ENCODE measurements at regions of chr7 and their contacts with region 1.

Region 1: GRCh38 chr7:149497456-149498261 is at the start of gene ZNF746:
- DNase-seq: peak; percentile 59 to 91 (median 78)
- ATAC-seq: peak; percentile 93
- H3K4me3 ChIP-seq: peak within 1 kb of the TSS; percentile 56 to 71
- H3K4me3 Mint-ChIP-seq: peak within 1 kb of the TSS; percentile 95
- H3K27ac ChIP-seq: peak within 1 kb of the TSS; percentile 40 to 51
- H3K27ac Mint-ChIP-seq: peak within 1 kb of the TSS; percentile 94
- H3K4me1 ChIP-seq: peaks cover 19% of the 10 kb centered on the region
- H3K4me1 Mint-ChIP-seq: peaks cover 32% of the 10 kb centered on the region
- H3K27me3 ChIP-seq: no peaks in the 10 kb centered on the region
- H3K27me3 Mint-ChIP-seq: no peaks in the 10 kb centered on the region
- CTCF ChIP-seq: peak; percentile 33
- total RNA-seq, gene ZNF746: 28.4 to 31.1 TPM

Region 2: GRCh38 chr7:149071641-149072437 is 425.8 kb before region 1 on chr7:
- CTCF ChIA-PET with region 1: no interaction called
- POLR2A ChIA-PET with region 1: interaction called, 3 read pairs
- intact Hi-C with region 1: loop called in 1 of 2 experiments (anchors 5 kb)
- DNase-seq: peak; percentile 19 to 74 (median 49)
- ATAC-seq: peak; percentile 73
- H3K4me3 ChIP-seq: no peak overlapping the region
- H3K4me3 Mint-ChIP-seq: no peak overlapping the region
- H3K27ac ChIP-seq: peak overlapping the region; percentile 42 to 63
- H3K27ac Mint-ChIP-seq: peak overlapping the region; percentile 77
- H3K4me1 ChIP-seq: no peaks in the 10 kb centered on the region
- H3K4me1 Mint-ChIP-seq: peaks cover 3% of the 10 kb centered on the region
- H3K27me3 ChIP-seq: no peaks in the 10 kb centered on the region
- H3K27me3 Mint-ChIP-seq: no peaks in the 10 kb centered on the region
- CTCF ChIP-seq: no peak

Region 3: DNA sequence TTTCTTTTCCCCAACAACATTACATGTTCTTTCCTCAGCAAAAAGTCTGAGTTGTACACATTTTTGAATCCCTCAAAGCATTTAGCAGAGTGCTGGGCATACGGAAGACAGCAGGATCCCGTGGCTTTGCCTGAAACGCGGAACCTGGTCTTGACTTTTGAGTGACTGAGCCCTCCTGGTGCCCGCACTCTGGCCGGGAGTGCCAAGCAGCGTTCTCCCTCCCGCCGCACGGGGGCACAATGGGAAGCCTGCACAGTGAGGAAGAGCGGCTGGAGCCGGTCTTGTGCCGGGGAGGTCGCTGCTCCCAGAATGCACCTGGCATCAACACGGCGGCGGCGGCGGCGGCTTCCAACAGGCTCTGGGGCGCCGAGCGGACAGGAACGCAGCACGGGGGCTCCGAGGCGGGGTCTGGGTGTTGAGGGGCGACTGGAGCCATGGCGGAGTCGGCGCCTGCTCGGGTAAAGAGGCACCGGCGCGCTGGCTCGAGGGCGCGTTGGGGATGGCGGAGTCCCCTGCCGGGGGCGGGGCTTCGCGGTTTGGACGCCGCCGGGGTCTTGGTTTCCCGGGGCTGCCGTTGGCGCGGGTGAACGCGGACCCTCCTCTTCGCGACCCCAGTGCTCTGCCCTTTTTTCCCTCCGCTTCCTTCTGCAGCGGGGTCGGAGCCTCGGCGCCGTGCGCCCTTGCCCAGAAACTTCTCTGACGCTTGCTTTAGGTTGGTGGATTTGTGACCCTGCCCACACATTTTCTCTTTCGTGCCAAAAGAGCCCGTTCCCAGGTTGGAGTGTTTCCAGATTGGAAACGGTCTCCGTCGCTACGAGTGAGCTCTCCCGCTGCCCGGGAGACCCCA is 258.1 kb before region 1 on chr7 and contains the start of gene ZNF212:
- CTCF ChIA-PET with region 1: no interaction called
- POLR2A ChIA-PET with region 1: no interaction called
- intact Hi-C with region 1: loop called (anchors 1 to 2 kb)
- DNase-seq: peak; percentile 76 to 92 (median 89)
- ATAC-seq: peak; percentile 100
- H3K4me3 ChIP-seq: peak within 1 kb of the TSS; percentile 81 to 95
- H3K4me3 Mint-ChIP-seq: peak within 1 kb of the TSS; percentile 92
- H3K27ac ChIP-seq: peak within 1 kb of the TSS; percentile 41 to 67
- H3K27ac Mint-ChIP-seq: peak within 1 kb of the TSS; percentile 91
- H3K4me1 ChIP-seq: peaks cover 23% of the 10 kb centered on the region
- H3K4me1 Mint-ChIP-seq: peaks cover 34% of the 10 kb centered on the region
- H3K27me3 ChIP-seq: peaks cover 0 to 4% of the 10 kb centered on the region in 2 experiments
- H3K27me3 Mint-ChIP-seq: peaks cover 7% of the 10 kb centered on the region
- CTCF ChIP-seq: peak; percentile 85
- total RNA-seq, gene ZNF212: 20.9 to 22.1 TPM

Region 4: GRCh38 chr7:149284850-149285626 is 212.6 kb before region 1 on chr7:
- CTCF ChIA-PET with region 1: no interaction called
- POLR2A ChIA-PET with region 1: no interaction called
- intact Hi-C with region 1: loop called (anchors 1 to 2 kb)
- DNase-seq: peak; percentile 96 to 99 (median 98)
- ATAC-seq: peak; percentile 96
- H3K4me3 ChIP-seq: peak overlapping the region; percentile 45 to 65
- H3K4me3 Mint-ChIP-seq: peak overlapping the region; percentile 84
- H3K27ac ChIP-seq: peak overlapping the region; percentile 36 to 42
- H3K27ac Mint-ChIP-seq: peak overlapping the region; percentile 91
- H3K4me1 ChIP-seq: peaks cover 39% of the 10 kb centered on the region
- H3K4me1 Mint-ChIP-seq: peaks cover 42% of the 10 kb centered on the region
- H3K27me3 ChIP-seq: no peaks in the 10 kb centered on the region
- H3K27me3 Mint-ChIP-seq: no peaks in the 10 kb centered on the region
- CTCF ChIP-seq: no peak

Region 5: DNA sequence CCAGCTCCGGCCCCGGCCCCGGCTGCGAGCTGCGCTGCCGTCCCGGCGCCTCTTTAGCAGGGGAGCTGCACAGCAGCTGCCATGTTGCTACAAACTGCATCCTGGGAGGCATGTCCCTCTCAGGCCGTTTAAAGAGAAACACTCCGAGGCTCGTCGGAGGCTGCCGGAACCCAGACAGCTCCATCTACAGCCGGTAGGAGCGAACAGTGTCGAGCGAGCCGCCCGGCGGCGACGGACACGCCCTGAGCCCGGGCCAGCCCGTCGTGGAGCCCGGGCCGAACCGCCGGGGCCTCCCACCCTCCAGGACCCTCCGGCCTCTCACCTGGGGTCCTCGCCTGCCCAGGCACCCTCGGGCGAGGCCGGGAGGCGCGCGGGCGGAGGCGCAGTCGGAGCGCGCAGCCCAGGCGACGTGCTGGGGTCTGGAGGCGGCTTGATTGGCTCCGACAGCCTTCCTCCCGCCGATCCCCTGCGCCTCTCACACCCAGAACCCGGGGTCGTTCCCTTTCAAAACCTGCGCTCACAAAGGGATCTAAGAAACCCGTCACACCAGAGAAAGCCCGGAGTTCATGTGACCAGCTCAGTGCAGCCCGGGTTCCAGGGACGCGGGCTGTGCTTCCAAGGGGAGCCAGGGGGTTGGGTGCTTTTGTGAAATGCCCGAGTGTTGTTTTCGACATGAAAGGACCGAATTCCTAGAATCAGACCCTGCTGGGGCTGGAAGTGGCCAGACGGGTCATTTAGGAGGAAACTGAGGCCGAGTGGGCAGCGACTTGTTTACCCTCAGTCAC is 37.0 kb before region 1 on chr7 and contains the start of gene ZNF777:
- CTCF ChIA-PET with region 1: no interaction called
- POLR2A ChIA-PET with region 1: no interaction called
- intact Hi-C with region 1: loop called (anchors 1 to 2 kb)
- DNase-seq: peak; percentile 66 to 90 (median 81)
- ATAC-seq: peak; percentile 97
- H3K4me3 ChIP-seq: peak within 1 kb of the TSS; percentile 69 to 74
- H3K4me3 Mint-ChIP-seq: peak within 1 kb of the TSS; percentile 88
- H3K27ac ChIP-seq: peak within 1 kb of the TSS; percentile 55 to 69
- H3K27ac Mint-ChIP-seq: peak within 1 kb of the TSS; percentile 72
- H3K4me1 ChIP-seq: peaks cover 24% of the 10 kb centered on the region
- H3K4me1 Mint-ChIP-seq: peaks cover 33% of the 10 kb centered on the region
- H3K27me3 ChIP-seq: no peaks in the 10 kb centered on the region
- H3K27me3 Mint-ChIP-seq: peaks cover 10% of the 10 kb centered on the region
- CTCF ChIP-seq: peak; percentile 57
- total RNA-seq, gene ZNF777: 21.0 to 22.2 TPM

Region 6: DNA sequence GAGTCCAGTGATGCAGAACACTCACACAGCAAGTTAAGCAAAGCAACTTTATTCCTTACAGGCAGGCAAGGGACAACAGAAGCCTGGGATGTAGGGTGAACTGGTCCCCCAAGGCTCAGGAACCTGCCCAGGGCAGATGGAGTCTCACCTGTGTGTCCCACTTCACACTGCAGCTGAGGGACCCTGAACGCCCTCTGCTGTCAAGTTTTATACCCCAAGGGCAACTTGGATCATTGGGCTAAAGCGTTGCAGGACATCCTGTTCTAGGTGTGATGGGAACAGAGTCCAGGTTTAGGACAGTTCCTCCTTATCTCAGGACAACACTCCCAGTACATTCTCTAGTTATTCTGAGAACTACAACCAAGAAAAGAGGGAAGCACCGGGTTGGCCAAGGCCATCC is 49.5 kb after region 1 on chr7:
- CTCF ChIA-PET with region 1: no interaction called
- POLR2A ChIA-PET with region 1: no interaction called
- intact Hi-C with region 1: no loop called
- DNase-seq: no peak
- ATAC-seq: no peak
- H3K4me3 ChIP-seq: no peak overlapping the region
- H3K4me3 Mint-ChIP-seq: no peak overlapping the region
- H3K27ac ChIP-seq: no peak overlapping the region
- H3K27ac Mint-ChIP-seq: peak overlapping the region; percentile 4
- H3K4me1 ChIP-seq: no peaks in the 10 kb centered on the region
- H3K4me1 Mint-ChIP-seq: no peaks in the 10 kb centered on the region
- H3K27me3 ChIP-seq: no peaks in the 10 kb centered on the region
- H3K27me3 Mint-ChIP-seq: no peaks in the 10 kb centered on the region
- CTCF ChIP-seq: no peak

Region 7: DNA sequence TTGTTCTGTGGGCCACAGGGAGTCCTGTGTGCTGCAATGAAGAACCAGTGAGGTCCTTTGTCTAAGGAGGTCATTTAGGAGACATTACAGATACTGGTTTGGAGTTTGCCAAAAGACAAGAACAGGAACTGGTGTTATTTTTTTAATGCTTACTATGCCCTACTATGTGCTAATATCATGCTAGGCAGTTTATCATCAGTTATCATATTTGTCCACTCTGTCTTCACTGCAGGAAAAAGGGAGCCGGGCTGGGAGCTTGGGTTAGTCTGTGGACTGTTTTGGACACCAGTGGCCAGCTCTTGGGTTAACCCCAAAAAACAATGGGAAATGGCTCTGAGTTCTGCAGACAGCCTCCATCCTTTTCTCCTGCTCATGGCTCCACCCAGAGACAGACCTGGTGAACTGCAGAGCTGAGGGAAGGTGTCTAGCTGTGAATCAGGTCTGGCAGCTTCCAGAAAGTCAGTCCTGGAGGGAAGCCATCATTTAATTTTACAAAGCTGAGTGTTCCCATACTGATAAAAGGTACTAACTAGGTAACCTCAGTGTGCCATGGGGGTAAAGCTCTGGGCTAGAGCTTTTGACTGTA is 101.2 kb after region 1 on chr7:
- CTCF ChIA-PET with region 1: no interaction called
- POLR2A ChIA-PET with region 1: no interaction called
- intact Hi-C with region 1: no loop called
- DNase-seq: peak in 2 of 9 experiments; percentile 19 to 37
- ATAC-seq: no peak
- H3K4me3 ChIP-seq: no peak overlapping the region
- H3K4me3 Mint-ChIP-seq: no peak overlapping the region
- H3K27ac ChIP-seq: no peak overlapping the region
- H3K27ac Mint-ChIP-seq: no peak overlapping the region
- H3K4me1 ChIP-seq: peaks cover 22% of the 10 kb centered on the region
- H3K4me1 Mint-ChIP-seq: peaks cover 36% of the 10 kb centered on the region
- H3K27me3 ChIP-seq: no peaks in the 10 kb centered on the region
- H3K27me3 Mint-ChIP-seq: no peaks in the 10 kb centered on the region
- CTCF ChIP-seq: no peak

Region 8: DNA sequence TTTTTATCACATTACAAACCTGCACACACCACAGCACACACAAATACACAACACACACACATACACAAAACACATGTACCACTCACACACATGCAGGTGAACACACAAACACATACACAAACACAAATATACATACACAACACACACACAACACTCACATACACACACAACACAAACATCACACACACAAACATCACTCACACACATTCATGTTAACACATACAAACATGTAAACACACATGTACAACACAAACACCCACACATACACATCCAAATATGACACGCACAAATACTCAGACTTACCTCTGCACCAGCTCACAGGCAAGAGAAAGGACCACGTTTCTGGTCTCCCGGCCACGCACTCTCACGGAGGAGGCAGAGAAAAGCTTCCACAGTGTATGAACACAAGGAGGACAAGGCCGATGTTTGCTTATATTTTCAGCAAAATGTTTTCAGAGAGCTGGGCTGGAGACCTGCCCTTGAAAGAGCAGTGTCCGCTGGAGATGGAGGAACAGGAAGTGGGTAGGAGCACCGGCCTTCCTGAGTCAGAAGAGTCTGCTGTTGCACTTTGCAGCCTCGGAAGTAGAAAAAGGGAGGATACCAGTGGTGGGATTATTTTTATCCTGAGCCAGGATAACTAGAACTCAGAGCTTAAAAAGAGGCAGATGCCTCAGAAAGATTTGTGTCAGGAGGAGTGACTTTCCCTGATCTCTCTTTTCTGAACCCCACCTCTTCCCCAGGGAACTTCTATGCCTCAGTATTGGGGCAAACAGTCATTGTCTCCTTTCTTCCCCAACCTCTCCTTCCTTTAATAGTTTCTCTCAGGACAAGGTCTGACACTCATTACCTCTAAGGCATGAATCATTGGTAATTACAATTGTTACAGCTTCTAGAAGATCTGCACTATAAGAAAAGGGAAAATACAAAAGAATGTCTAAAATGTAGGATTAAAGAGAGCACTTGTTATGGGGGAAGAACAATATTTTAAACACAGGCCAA is 1134.5 kb after region 1 on chr7 and contains the start of gene GIMAP6:
- CTCF ChIA-PET with region 1: no interaction called
- POLR2A ChIA-PET with region 1: no interaction called
- intact Hi-C with region 1: no loop called
- DNase-seq: peak in 8 of 9 experiments; percentile 33 to 79 (median 50)
- ATAC-seq: peak; percentile 61
- H3K4me3 ChIP-seq: peak within 1 kb of the TSS; percentile 82 to 85
- H3K4me3 Mint-ChIP-seq: peak within 1 kb of the TSS; percentile 97
- H3K27ac ChIP-seq: peak within 1 kb of the TSS; percentile 58 to 83
- H3K27ac Mint-ChIP-seq: peak within 1 kb of the TSS; percentile 96
- H3K4me1 ChIP-seq: peaks cover 54% of the 10 kb centered on the region
- H3K4me1 Mint-ChIP-seq: peaks cover 86% of the 10 kb centered on the region
- H3K27me3 ChIP-seq: no peaks in the 10 kb centered on the region
- H3K27me3 Mint-ChIP-seq: no peaks in the 10 kb centered on the region
- CTCF ChIP-seq: no peak
- total RNA-seq, gene GIMAP6: 10.5 to 10.8 TPM